Esophagus muscularis mucosa (tissue), 4 donors: ENCODE measurements at regions of chr12 and their contacts with region 1.

Region 1: GRCh38 chr12:30847259-30847658 is 79.3 kb upstream of the TSPAN11 start:
- DNase-seq: no peak
- H3K4me3 ChIP-seq: no peak overlapping the region
- H3K27ac ChIP-seq: no peak overlapping the region
- H3K4me1 ChIP-seq: peaks cover 0 to 5% (median 2%) of the 10 kb centered on the region in 4 donors
- H3K27me3 ChIP-seq: peaks cover 0 to 15% (median 0%) of the 10 kb centered on the region in 4 donors
- CTCF ChIP-seq: peak; percentile 52 to 69 (median 58)
- EP300 ChIP-seq: no peak
- POLR2A ChIP-seq: no peak

Region 2: DNA sequence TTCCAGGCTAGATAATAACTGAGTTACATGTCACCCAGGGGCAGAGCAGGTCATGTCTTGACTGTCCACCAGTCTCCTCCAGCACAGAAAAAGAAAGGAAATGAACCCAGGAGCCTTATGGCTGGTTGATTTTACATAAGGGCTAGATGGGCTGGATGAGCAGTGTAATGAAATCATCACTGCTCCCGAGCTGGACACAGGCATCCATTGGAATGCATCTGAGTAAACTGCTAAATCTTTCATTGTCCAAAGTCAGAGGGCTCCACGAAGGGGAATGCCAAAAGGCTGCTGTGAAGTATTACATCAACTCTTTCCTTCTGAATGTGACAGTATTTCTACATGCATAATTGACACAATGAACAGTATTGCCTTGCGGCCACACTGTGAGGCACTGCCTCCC is 49.2 kb after region 1 on chr12:
- intact Hi-C with region 1: no loop called
- DNase-seq: peak; percentile 86
- H3K4me3 ChIP-seq: no peak overlapping the region
- H3K27ac ChIP-seq: no peak overlapping the region
- H3K4me1 ChIP-seq: no peaks in the 10 kb centered on the region
- H3K27me3 ChIP-seq: peaks cover 0 to 4% (median 0%) of the 10 kb centered on the region in 4 donors
- CTCF ChIP-seq: no peak
- EP300 ChIP-seq: no peak
- POLR2A ChIP-seq: no peak

Region 3: DNA sequence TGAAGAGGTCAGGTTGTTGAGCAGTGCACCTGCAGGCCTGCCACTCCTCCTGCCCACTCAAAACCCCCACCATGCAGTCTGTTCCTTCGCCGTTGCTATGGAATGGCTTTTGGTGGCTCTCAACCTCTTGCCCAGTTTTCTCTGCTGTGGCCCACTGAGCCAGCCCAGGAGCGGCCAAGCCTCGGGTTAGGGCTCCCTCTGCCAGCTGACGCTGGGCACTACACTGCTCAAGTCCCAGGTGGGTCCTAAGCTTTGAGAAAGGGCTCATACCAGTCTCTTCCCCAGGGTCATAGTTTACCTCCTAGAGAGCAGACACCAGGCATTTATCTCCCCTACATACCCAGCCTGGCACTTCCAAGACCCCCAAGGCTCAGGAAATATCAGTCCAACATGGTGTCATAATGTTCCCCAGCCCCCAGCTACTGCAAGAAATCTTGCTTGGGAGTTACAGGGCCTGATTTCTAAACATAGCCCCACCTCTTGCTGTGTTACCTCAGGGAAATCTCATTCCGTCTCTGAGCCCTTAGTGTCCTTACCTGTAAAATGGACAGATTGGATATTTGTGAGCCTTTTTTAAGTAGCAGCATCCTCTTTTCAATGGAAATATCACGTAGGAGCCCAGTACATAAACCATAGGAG is 138.7 kb after region 1 on chr12:
- intact Hi-C with region 1: loop called (anchors 5 kb)
- DNase-seq: no peak
- H3K4me3 ChIP-seq: no peak overlapping the region
- H3K27ac ChIP-seq: no peak overlapping the region
- H3K4me1 ChIP-seq: no peaks in the 10 kb centered on the region
- H3K27me3 ChIP-seq: no peaks in the 10 kb centered on the region
- CTCF ChIP-seq: peak; percentile 34 to 55 (median 36)
- EP300 ChIP-seq: no peak
- POLR2A ChIP-seq: no peak

Region 4: GRCh38 chr12:31274520-31275300 is 427.5 kb after region 1 on chr12:
- intact Hi-C with region 1: loop called (anchors 5 kb)
- DNase-seq: no peak
- H3K4me3 ChIP-seq: no peak overlapping the region
- H3K27ac ChIP-seq: no peak overlapping the region
- H3K4me1 ChIP-seq: peaks cover 0 to 13% (median 10%) of the 10 kb centered on the region in 4 donors
- H3K27me3 ChIP-seq: no peaks in the 10 kb centered on the region
- CTCF ChIP-seq: no peak
- EP300 ChIP-seq: no peak
- POLR2A ChIP-seq: no peak